ENCODE measurements at regions of chr1 and their contacts with region 1.

Region 1: DNA sequence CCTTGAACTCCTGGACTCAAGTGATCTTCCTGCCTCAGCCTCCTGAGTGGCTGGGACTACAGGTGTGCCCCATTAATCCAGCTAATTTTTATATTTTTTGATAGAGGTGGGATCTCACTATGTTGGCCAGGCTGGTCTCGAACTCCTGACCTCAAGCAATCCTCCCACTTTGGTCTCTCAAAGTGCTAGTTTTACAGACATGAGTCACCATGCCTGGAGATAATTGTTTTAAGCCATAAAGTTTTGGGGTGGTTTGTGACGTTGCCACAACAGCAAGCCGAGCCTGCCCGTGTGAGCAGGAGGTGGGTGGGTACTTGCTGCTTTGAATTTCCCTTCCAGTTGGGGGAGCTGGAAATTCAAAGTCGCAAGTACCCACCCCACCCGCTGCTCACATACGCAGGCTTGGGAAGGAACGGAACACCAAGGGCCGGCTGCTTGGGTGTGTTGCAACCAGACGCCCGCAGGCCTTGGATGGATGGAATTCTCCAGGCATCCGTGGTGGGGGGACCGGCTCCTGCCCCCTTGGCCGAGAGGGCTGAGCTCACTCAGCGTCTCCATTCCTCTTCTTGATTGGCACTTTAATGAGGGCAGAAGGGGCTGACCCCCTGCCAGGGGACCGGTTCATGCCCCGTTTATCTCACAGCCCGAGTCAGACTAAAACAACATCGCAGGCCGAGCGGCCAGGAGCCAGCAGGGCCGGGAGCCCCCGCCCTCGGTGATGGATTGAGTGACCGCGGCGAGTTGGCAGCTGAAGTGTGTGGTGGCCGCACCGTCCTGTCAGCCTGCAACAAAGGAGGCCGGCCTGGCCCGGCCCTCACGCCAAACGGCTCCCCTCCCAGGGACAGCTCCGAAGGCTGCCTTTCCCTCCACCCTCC is 78.1 kb downstream of the DHRS3 start:
- DNase-seq: peak; percentile 97
- H3K4me3 ChIP-seq: peak overlapping the region in 2 of 4 donors; percentile 16 to 23
- H3K27ac ChIP-seq: peak overlapping the region; percentile 77 to 89 (median 87)
- H3K4me1 ChIP-seq: peaks cover 0 to 35% (median 28%) of the 10 kb centered on the region in 4 donors
- H3K27me3 ChIP-seq: no peaks in the 10 kb centered on the region
- CTCF ChIP-seq: no peak
- EP300 ChIP-seq: peak; percentile 55 to 92 (median 74)
- POLR2A ChIP-seq: no peak

Region 2: GRCh38 chr1:12477936-12478611 is 61.9 kb before region 1 on chr1:
- intact Hi-C with region 1: loop called (anchors 5 kb)
- DNase-seq: peak; percentile 90
- H3K4me3 ChIP-seq: no peak overlapping the region
- H3K27ac ChIP-seq: peak overlapping the region; percentile 80 to 90 (median 85)
- H3K4me1 ChIP-seq: peaks cover 0 to 92% (median 88%) of the 10 kb centered on the region in 4 donors
- H3K27me3 ChIP-seq: no peaks in the 10 kb centered on the region
- CTCF ChIP-seq: no peak
- EP300 ChIP-seq: peak in 3 of 4 donors; percentile 23 to 59 (median 24)
- POLR2A ChIP-seq: no peak

Region 3: DNA sequence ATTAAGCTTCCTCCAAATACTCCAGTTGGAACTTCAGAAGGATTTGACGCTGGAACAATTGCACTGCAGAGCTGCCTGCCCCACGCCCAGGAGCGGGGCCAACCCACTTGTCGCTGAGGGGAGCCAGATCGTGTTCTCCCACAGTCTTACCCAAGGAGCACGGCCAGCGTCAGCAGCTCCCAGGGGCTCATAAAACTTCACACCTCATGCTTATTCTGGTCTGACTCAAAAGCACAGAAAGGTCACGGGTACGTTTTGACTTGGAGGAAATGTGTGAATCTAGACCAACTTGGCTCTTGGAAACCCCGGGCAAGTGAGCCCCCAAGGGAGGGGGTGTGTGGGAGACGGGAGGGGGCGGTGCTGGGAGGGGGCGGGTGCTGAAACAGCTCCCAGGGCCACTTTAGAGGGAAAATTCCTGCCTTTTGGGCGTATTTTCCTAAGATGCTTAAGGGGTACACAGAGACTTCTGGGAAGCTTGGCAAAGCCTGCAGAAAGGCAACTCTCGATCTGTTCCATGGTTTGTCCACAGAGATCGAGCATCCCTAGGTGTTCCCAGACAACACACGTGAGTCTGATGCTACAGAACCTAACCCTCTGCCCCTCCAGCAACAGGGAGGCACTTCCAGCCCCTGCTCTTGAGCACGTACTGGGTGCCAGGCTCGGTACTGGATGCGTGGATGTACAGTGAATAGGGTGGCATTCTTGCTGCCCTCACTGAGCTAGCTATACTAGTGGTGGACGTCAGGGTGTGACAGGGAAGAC is 20.8 kb before region 1 on chr1:
- intact Hi-C with region 1: loop called (anchors 2 kb)
- DNase-seq: peak; percentile 97
- H3K4me3 ChIP-seq: peak overlapping the region in 3 of 4 donors; percentile 4 to 11 (median 7)
- H3K27ac ChIP-seq: peak overlapping the region; percentile 45 to 85 (median 79)
- H3K4me1 ChIP-seq: peaks cover 0 to 19% (median 17%) of the 10 kb centered on the region in 4 donors
- H3K27me3 ChIP-seq: no peaks in the 10 kb centered on the region
- CTCF ChIP-seq: no peak
- EP300 ChIP-seq: peak; percentile 61 to 93 (median 82)
- POLR2A ChIP-seq: no peak

Region 4: DNA sequence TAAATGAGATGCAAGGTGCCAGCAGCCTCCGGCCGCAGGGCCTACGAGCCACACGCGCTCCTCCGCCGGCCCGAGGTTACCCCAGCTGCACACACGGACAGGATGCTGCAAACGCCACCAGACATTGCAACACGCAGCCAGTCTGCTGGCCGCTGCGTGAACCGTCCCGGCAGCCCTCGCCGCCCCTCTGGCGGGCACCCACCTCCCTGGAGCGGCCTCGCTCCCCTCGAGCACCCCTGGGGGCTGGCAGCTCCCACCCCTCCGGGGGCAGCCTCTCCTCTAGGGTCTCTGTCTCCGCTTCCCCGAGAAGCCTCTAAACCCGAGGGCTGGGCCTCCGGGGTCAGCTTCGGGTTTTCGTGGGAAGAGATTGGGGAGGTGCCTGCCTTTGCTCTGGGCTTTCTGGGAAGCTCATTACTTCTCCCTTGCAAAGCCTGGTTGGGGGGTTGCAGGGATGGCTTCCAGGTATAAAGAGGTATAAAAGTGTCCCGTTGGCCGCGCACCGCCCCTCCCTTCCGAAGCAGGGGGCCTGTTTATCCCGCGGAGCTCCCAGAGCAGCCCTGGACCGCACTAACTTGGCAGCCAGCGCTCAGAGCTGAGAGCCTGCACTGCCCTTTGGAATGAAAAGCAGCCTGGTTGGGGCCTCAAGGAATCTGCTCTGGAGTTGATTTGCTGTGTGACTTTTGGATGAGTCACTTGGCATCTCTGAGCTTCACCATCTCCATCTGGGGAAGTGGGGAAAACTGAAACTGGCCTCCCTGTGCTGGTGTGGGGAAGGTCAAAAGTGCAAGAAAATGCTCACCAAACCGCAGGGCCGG is 56.3 kb after region 1 on chr1:
- intact Hi-C with region 1: loop called (anchors 1 kb)
- DNase-seq: peak; percentile 97
- H3K4me3 ChIP-seq: peak overlapping the region; percentile 10 to 47 (median 42)
- H3K27ac ChIP-seq: peak overlapping the region; percentile 90 to 99 (median 94)
- H3K4me1 ChIP-seq: peaks cover 0 to 100% (median 98%) of the 10 kb centered on the region in 4 donors
- H3K27me3 ChIP-seq: no peaks in the 10 kb centered on the region
- CTCF ChIP-seq: no peak
- EP300 ChIP-seq: peak in 2 of 4 donors; percentile 80 to 88
- POLR2A ChIP-seq: peak in 1 of 2 donors; percentile 7